Naive thymus-derived CD4-positive, alpha-beta T cell (primary cell): ENCODE measurements at regions of chr19 and their contacts with region 1.

Region 1: GRCh38 chr19:14136509-14137281 is at the start of gene ASF1B:
- DNase-seq: peak; percentile 94 to 99 (median 99)
- ATAC-seq: peak; percentile 88
- H3K4me3 ChIP-seq: peak within 1 kb of the TSS; percentile 87
- H3K4me3 Mint-ChIP-seq: peak within 1 kb of the TSS; percentile 84 to 97 (median 88)
- H3K27ac ChIP-seq: peak within 1 kb of the TSS; percentile 90
- H3K27ac Mint-ChIP-seq: peak within 1 kb of the TSS; percentile 88 to 97 (median 93)
- H3K4me1 ChIP-seq: peaks cover 8 to 15% of the 10 kb centered on the region in 2 donors
- H3K4me1 Mint-ChIP-seq: peaks cover 0 to 43% (median 34%) of the 10 kb centered on the region in 7 donors
- H3K27me3 ChIP-seq: no peaks in the 10 kb centered on the region
- H3K27me3 Mint-ChIP-seq: no peaks in the 10 kb centered on the region
- total RNA-seq, gene ASF1B: 0.98 to 79.0 (median 2.1) TPM

Region 2: GRCh38 chr19:14006243-14006765 is 130.4 kb before region 1 on chr19 and contains the start of gene RFX1:
- CTCF ChIA-PET with region 1: no interaction called
- POLR2A ChIA-PET with region 1: interaction called, 7 read pairs
- intact Hi-C with region 1: loop called (anchors 1 to 5 kb)
- DNase-seq: peak; percentile 99 to 100 (median 100)
- ATAC-seq: peak; percentile 79
- H3K4me3 ChIP-seq: peak within 1 kb of the TSS; percentile 77
- H3K4me3 Mint-ChIP-seq: peak within 1 kb of the TSS; percentile 91 to 98 (median 96)
- H3K27ac ChIP-seq: peak within 1 kb of the TSS; percentile 99
- H3K27ac Mint-ChIP-seq: peak within 1 kb of the TSS; percentile 98 to 100 (median 100)
- H3K4me1 ChIP-seq: peaks cover 36 to 41% of the 10 kb centered on the region in 2 donors
- H3K4me1 Mint-ChIP-seq: peaks cover 26 to 47% (median 38%) of the 10 kb centered on the region in 7 donors
- H3K27me3 ChIP-seq: no peaks in the 10 kb centered on the region
- H3K27me3 Mint-ChIP-seq: no peaks in the 10 kb centered on the region
- total RNA-seq, gene RFX1: 15.7 to 23.5 (median 20.5) TPM

Region 3: GRCh38 chr19:14117668-14118164 is 19.0 kb before region 1 on chr19 and contains the start of gene PRKACA:
- CTCF ChIA-PET with region 1: interaction called, 10 read pairs
- POLR2A ChIA-PET with region 1: interaction called, 11 read pairs
- intact Hi-C with region 1: loop called (anchors 1 kb)
- DNase-seq: peak; percentile 93 to 99 (median 98)
- ATAC-seq: peak; percentile 93
- H3K4me3 ChIP-seq: peak within 1 kb of the TSS; percentile 67
- H3K4me3 Mint-ChIP-seq: peak within 1 kb of the TSS; percentile 92 to 98 (median 95)
- H3K27ac ChIP-seq: peak within 1 kb of the TSS; percentile 87
- H3K27ac Mint-ChIP-seq: peak within 1 kb of the TSS; percentile 92 to 99 (median 97)
- H3K4me1 ChIP-seq: peaks cover 15 to 46% of the 10 kb centered on the region in 2 donors
- H3K4me1 Mint-ChIP-seq: peaks cover 20 to 56% (median 46%) of the 10 kb centered on the region in 7 donors
- H3K27me3 ChIP-seq: no peaks in the 10 kb centered on the region
- H3K27me3 Mint-ChIP-seq: no peaks in the 10 kb centered on the region
- total RNA-seq, gene PRKACA: 41.3 to 101 (median 63.1) TPM

Region 4: DNA sequence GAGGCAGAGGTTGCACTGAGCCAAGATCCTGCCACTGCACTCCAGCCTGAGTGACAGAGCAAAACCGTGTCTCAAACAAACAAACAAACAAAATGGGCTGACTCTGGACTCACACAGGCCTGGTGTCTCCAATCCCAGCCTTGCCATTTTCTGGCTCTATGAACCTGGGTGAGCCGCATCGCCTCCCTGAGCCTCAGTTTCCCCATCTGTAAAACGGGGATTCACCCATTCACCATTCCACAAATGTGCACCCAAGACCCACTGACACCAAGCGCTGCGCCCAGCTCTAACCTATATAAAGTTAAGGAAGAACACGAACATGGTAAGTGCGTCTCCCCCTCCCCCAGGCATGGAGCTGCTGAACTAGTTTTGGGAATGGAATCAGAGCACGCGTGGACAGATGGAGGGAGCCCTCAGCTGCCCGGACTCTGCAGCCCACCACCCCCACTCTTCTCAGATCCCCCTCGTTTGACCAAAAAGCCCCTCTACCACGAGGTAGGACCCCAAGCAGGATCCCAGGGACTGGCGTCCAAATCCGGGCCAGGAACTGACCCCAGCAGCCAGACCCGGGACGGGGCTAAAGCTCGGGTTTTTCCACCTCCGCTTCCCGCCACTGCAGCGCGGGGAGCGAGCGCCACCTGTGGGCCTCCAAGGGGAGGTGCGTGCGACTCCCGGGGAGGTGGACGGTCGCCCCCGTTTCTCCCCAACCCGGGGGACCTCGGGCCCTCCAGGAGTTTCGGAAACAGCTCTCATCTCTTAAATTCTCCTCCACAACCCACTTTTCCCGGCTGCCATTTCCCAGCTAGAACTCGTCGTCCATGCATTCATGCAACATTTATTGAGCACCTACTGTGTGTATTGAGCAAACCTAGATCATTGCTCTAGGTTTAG is 211.5 kb after region 1 on chr19:
- CTCF ChIA-PET with region 1: interaction called, 39 read pairs
- POLR2A ChIA-PET with region 1: interaction called, 8 read pairs
- intact Hi-C with region 1: loop called (anchors 1 kb)
- DNase-seq: peak; percentile 43 to 81 (median 59)
- ATAC-seq: peak; percentile 84
- H3K4me3 ChIP-seq: no peak overlapping the region
- H3K4me3 Mint-ChIP-seq: peak overlapping the region; percentile 19 to 82 (median 66)
- H3K27ac ChIP-seq: peak overlapping the region; percentile 38
- H3K27ac Mint-ChIP-seq: peak overlapping the region in 4 of 9 donors; percentile 51 to 80 (median 64)
- H3K4me1 ChIP-seq: peaks cover 8 to 12% of the 10 kb centered on the region in 2 donors
- H3K4me1 Mint-ChIP-seq: peaks cover 9 to 25% (median 19%) of the 10 kb centered on the region in 7 donors
- H3K27me3 ChIP-seq: no peaks in the 10 kb centered on the region
- H3K27me3 Mint-ChIP-seq: no peaks in the 10 kb centered on the region

Region 5: DNA sequence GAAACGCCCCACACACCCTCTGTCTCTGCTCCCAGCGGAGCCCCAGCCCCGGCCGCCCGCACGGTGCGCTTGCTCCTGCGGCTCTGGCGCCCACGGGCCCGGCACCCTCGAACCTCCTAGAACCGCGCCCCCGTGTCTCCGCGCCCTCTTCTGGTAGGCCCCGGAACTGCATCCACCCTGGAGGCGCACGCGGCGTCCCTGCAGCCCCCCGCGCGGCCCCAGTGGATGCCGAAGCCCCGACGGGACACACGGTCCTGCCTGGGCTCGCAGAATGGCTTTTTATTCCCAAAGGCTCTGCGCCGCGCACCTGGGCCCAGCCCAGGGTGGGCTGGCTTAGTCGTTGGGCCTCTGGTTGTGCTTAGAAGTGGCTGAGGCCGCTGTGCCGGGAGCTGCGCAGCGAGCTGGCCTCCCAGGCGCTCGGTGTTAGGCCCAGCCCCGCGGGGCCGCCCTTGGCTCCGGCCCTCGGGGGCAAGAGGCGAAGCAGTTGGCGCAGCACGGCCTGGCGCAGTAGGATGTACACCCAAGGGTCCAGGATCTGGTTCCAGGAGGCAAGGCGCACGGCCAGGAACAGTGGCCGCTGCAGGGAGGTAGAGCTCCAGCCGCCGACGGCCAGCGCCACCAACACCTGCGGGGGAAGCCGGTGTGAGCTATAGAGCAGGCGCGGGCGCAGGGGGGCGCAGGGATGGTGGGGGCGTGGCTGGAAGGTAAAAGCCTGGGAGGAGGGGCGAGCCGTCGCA is 335.7 kb after region 1 on chr19:
- CTCF ChIA-PET with region 1: interaction called, 3 read pairs
- POLR2A ChIA-PET with region 1: no interaction called
- intact Hi-C with region 1: loop called (anchors 1 to 5 kb)
- DNase-seq: peak; percentile 65 to 94 (median 82)
- ATAC-seq: peak; percentile 85
- H3K4me3 ChIP-seq: peak overlapping the region; percentile 55
- H3K4me3 Mint-ChIP-seq: peak overlapping the region; percentile 25 to 84 (median 68)
- H3K27ac ChIP-seq: no peak overlapping the region
- H3K27ac Mint-ChIP-seq: peak overlapping the region in 1 of 9 donors; percentile 41
- H3K4me1 ChIP-seq: peaks cover 4 to 17% of the 10 kb centered on the region in 2 donors
- H3K4me1 Mint-ChIP-seq: peaks cover 0 to 39% (median 29%) of the 10 kb centered on the region in 7 donors
- H3K27me3 ChIP-seq: peaks cover 0 to 4% of the 10 kb centered on the region in 2 donors
- H3K27me3 Mint-ChIP-seq: peaks cover 6 to 19% (median 12%) of the 10 kb centered on the region in 5 donors

Region 6: DNA sequence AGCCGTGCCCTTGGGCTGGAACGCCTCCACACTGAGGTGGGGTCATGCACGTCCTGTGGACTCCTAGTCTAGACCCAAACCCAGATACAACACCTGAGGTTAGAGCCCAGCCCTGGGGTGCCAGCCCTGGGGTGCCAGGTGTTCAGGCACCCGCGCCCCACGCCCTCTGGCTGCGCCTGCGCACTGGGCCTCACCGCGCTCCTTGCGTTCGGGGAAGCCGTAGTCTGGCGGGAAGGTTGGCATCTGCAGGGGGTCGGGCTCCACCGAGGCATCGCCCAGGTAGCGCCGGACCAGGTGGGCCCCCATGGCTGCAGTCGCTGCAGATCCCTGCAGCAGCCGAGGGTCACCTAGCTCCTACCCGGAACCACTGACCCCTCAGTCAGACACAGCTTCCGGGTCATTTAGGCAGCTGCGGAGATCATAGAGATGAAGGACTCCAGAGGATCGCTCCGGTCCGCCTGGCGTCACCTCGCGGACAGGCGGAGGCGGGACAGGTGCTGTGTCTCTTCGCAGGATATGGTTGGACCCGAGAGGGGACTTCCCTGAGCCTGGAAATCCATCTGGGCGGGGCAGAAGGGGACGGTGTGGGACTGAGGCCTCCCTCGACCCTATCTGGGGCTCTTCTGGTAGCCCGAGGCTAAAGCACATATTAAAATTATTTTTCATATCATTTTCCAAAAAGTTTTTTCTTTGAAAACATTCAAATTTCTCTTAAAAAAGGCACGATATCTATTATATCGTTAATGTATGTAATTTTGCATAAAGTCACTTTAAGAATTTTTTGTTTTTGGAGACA is 435.2 kb after region 1 on chr19 and contains the start of gene NDUFB7:
- CTCF ChIA-PET with region 1: interaction called, 3 read pairs
- POLR2A ChIA-PET with region 1: no interaction called
- intact Hi-C with region 1: loop called in 1 of 2 experiments (anchors 5 kb)
- DNase-seq: peak; percentile 76 to 91 (median 87)
- ATAC-seq: peak; percentile 98
- H3K4me3 ChIP-seq: peak within 1 kb of the TSS; percentile 99
- H3K4me3 Mint-ChIP-seq: peak within 1 kb of the TSS; percentile 92 to 97 (median 96)
- H3K27ac ChIP-seq: peak within 1 kb of the TSS; percentile 74
- H3K27ac Mint-ChIP-seq: peak within 1 kb of the TSS; percentile 83 to 96 (median 89)
- H3K4me1 ChIP-seq: peaks cover 14% of the 10 kb centered on the region in 2 donors
- H3K4me1 Mint-ChIP-seq: peaks cover 26 to 54% (median 37%) of the 10 kb centered on the region in 7 donors
- H3K27me3 ChIP-seq: no peaks in the 10 kb centered on the region
- H3K27me3 Mint-ChIP-seq: no peaks in the 10 kb centered on the region
- total RNA-seq, gene NDUFB7: 50.6 to 129 (median 63.4) TPM